ENCODE measurements at regions of chr14 and their contacts with region 1.

Region 1: DNA sequence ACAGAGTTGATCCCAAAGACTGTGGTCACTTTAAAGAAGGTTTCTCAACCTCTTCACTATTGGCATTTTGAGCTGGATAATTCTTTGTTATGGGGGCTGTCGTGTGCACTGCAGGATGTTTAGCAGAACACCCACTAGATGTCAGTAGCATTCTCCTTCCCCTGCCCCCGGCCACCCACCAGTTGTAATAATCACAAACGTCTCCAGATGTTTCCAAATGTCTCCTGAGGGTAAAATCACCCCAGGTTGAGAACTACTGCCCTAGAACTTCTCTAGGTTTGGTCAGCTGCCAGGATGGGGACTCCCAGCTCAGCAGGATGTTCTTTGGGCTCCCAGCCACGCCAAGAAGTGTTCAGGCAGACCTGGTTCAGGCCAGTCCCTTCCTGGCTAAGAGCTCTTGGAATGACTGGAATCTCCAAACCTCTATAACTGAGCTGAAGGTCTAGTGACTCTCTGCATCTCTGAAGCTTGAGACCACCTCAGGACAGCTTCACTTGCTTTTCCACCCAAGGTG is 12.5 kb upstream of the AJUBA start:
- DNase-seq: peak; percentile 40 to 41
- ATAC-seq: peak; percentile 91 to 94
- H3K4me3 ChIP-seq: no peak overlapping the region
- H3K27ac ChIP-seq: peak overlapping the region in 1 of 2 experiments; percentile 56; a peak in 2 of 6 replicates
- H3K4me1 ChIP-seq: peaks cover 5% of the 10 kb centered on the region; the same call in 2 of the 3 replicates
- CTCF ChIP-seq: peak; percentile 60
- EP300 ChIP-seq: no peak
- POLR2A ChIP-seq: no peak
- RAD21 ChIP-seq: peak; percentile 60 to 75; a peak in 4 of 5 replicates

Region 2: DNA sequence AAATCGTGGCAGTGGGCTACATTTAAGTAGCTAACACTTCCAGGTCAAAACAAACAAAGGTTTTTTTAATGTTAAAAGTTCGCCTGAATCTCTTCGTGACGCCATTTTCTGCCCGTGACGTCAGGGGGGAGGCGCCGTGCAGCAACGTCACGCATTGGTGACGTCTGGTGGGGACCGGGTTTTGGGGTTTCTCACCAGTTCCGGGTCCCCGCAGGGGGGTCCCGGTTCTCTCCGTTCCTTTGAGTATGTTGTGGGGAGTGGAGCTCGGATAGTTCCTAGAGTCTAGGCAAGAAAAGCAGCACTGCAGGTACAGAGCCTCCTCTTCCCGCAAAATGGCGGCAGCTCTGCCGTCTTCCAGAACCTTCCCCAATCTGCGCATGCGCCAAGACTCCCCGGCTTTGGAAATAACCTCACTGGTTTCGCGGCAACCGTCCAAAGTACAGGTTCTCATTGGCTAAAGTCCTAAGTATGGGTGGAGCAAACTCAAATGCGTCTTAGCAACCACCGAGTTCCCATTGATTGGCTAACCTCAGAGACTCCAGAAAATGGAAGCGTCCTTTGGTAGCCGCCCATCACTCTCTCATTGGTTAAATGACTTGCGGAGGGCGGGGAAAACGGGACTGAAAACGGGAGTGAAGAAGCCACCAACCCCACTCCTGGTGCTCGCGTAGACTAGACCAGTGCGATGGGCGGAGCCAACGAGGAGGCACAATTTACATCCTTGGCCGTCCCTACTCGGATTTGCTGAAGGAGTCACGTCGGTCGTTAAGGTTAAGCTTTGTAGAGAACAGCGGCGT is 75.8 kb before region 1 on chr14 and contains the start of gene RBM23:
- CTCF ChIA-PET with region 1: no interaction called
- POLR2A ChIA-PET with region 1: no interaction called
- DNase-seq: peak; percentile 95 to 100
- ATAC-seq: peak; percentile 96 to 98
- H3K4me3 ChIP-seq: peak within 1 kb of the TSS; percentile 71
- H3K27ac ChIP-seq: peak within 1 kb of the TSS; percentile 87 to 92
- H3K4me1 ChIP-seq: peaks cover 18% of the 10 kb centered on the region
- CTCF ChIP-seq: no peak
- EP300 ChIP-seq: no peak
- POLR2A ChIP-seq: peak; percentile 75
- RAD21 ChIP-seq: no peak
- polyA plus RNA-seq, gene RBM23: 68.0 and 71.7 TPM in 2 replicates

Region 3: DNA sequence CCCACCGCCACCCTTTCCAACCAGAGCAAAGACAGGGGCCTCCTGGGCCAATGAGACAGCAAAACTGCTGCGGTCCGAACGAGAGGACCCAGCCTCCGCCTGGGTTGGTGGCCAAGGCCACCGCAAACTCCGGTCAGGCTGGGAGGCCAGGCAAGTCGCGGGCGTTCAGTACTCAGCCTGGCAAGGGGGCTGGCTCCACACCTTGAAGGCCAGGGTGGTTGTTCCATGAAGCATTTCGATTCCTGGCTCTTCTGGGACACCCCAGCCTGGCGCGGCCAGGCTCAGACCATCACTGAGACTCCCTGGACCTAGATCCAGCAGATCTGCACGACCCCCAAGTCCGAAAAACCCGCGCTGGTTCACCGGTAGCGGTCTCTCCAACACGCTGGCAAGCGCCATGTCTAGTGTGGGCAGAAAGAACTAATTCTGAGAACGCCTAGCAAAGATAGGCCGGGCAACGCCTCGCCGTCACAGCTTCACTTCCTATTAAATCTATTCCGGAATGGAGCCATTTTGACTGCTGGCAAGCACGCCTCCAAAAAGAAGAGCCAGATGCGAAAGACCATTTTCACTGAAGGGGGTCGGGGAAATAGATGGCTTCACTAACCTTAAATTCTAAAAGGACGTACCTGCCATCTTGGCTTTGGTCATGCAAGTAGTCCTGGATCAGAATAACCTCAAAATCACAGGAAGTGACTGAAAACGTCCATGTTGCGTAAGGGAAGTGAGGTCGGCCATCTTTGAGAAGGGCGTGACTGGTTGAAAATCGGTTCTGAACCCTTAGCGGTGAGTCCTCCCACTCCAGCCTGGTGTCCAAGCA is 39.9 kb after region 1 on chr14 and contains the start of gene PSMB5:
- CTCF ChIA-PET with region 1: interaction called, 1,206 read pairs
- POLR2A ChIA-PET with region 1: interaction called, 4 read pairs
- DNase-seq: peak; percentile 98
- ATAC-seq: peak; percentile 97 to 99
- H3K4me3 ChIP-seq: peak within 1 kb of the TSS; percentile 76
- H3K27ac ChIP-seq: peak within 1 kb of the TSS; percentile 89 to 97
- H3K4me1 ChIP-seq: peaks cover 13% of the 10 kb centered on the region
- CTCF ChIP-seq: no peak
- EP300 ChIP-seq: no peak
- POLR2A ChIP-seq: peak; percentile 80
- RAD21 ChIP-seq: no peak
- polyA plus RNA-seq, gene PSMB5: 283 and 337 TPM in 2 replicates

Region 4: GRCh38 chr14:23147676-23148075 is 152.9 kb after region 1 on chr14:
- CTCF ChIA-PET with region 1: no interaction called
- POLR2A ChIA-PET with region 1: no interaction called
- DNase-seq: peak in 1 of 2 experiments; percentile 48
- ATAC-seq: peak in 1 of 2 experiments; percentile 64; a peak in 3 of 6 replicates
- H3K4me3 ChIP-seq: no peak overlapping the region
- H3K27ac ChIP-seq: peak overlapping the region in 1 of 2 experiments; percentile 32; a peak in 3 of 6 replicates
- H3K4me1 ChIP-seq: peaks cover 28% of the 10 kb centered on the region
- CTCF ChIP-seq: no peak
- EP300 ChIP-seq: no peak
- POLR2A ChIP-seq: no peak
- RAD21 ChIP-seq: no peak

Measured in A549 (cell line).